ENCODE measurements at regions of chr7 and their contacts with region 1.

Region 1: DNA sequence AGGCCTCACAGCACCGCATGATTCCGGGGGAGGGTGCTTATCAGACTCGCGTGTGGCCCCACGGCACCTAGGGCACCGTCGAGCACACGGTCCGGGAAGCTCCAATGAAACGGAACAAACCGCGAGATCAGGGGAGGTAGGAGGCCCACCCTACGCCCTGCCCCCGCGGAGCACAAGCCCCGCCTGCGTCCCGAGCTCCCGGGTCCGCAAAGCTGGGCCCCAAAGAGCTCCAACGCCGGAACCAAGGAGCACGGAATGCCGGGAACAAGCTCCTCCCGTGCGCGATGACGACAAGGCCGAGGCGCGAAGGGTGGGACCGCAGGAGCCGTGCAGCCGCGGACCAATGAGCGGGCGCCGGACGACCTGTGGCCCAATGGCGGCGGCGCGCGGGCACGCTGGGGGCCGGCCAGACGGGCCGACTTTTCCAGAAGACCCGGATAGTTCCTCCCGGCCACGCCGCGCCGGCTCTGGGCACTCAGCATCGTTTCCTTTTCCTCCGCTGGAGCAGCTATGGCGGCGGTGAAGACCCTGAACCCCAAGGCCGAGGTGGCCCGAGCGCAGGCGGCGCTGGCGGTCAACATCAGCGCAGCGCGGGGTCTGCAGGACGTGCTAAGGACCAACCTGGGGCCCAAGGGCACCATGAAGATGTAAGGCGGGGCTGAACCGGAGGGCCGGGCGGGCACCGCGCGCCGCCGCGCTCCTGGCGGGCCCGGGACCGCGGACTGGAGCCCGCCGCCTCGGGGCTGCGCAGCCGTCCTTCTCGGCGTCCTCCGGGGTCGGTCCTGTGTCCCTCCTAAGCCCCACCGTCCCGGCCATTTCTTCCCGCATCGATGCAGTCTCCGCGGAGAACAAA is at the starts of genes CCT6A and PSPH:
- DNase-seq: peak; percentile 82 to 89 (median 85)
- H3K4me3 ChIP-seq: peak within 1 kb of the TSS; percentile 10 to 95
- H3K4me3 Mint-ChIP-seq: peak within 1 kb of the TSS; percentile 90 to 99 (median 96)
- H3K27ac ChIP-seq: peak within 1 kb of the TSS; percentile 82
- H3K27ac Mint-ChIP-seq: peak within 1 kb of the TSS; percentile 87 to 98 (median 96)
- H3K4me1 ChIP-seq: peaks cover 41% of the 10 kb centered on the region
- H3K4me1 Mint-ChIP-seq: peaks cover 18 to 44% (median 28%) of the 10 kb centered on the region in 4 donors
- H3K27me3 ChIP-seq: no peaks in the 10 kb centered on the region
- H3K27me3 Mint-ChIP-seq: no peaks in the 10 kb centered on the region
- total RNA-seq, gene CCT6A: 72.9 to 78.2 TPM
- total RNA-seq, gene PSPH: 4.3 to 8.0 TPM

Region 2: DNA sequence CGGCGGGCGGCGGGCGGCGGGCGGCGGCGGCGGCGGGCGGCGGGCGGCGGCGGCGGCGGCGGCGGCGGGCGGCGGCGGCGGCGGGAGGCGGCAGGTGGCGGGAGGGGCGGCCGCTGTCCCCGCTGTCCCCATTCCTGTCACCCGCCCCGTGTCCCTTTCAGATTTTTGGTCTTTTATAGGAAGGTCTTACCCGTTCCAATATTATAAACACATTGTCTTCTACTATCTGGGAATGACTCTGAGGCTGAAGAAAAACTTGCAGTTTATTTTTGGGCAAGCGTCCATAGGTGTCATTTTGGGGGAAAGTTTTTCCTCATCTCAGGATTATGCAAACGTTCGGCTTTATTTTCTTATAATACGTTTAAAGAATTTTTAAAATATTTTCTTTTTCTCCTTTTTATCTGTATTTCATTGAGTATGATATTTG is 163.7 kb before region 1 on chr7:
- CTCF ChIA-PET with region 1: no interaction called
- POLR2A ChIA-PET with region 1: no interaction called
- intact Hi-C with region 1: loop called (anchors 2 kb)
- DNase-seq: peak in 2 of 5 donors; percentile 8 to 17
- H3K4me3 ChIP-seq: no peak overlapping the region
- H3K4me3 Mint-ChIP-seq: peak overlapping the region; percentile 81 to 89 (median 87)
- H3K27ac ChIP-seq: no peak overlapping the region
- H3K27ac Mint-ChIP-seq: peak overlapping the region; percentile 74 to 95 (median 88)
- H3K4me1 ChIP-seq: peaks cover 7% of the 10 kb centered on the region
- H3K4me1 Mint-ChIP-seq: peaks cover 5 to 10% (median 6%) of the 10 kb centered on the region in 4 donors
- H3K27me3 ChIP-seq: no peaks in the 10 kb centered on the region
- H3K27me3 Mint-ChIP-seq: peaks cover 0 to 2% of the 10 kb centered on the region in 2 donors

Region 3: GRCh38 chr7:55951637-55952351 is 99.8 kb before region 1 on chr7 and contains the start of gene MRPS17:
- CTCF ChIA-PET with region 1: no interaction called
- POLR2A ChIA-PET with region 1: no interaction called
- intact Hi-C with region 1: loop called (anchors 1 kb)
- DNase-seq: peak; percentile 92 to 95 (median 93)
- H3K4me3 ChIP-seq: peak within 1 kb of the TSS; percentile 88 to 96
- H3K4me3 Mint-ChIP-seq: peak within 1 kb of the TSS; percentile 92 to 97 (median 94)
- H3K27ac ChIP-seq: peak within 1 kb of the TSS; percentile 71
- H3K27ac Mint-ChIP-seq: peak within 1 kb of the TSS; percentile 87 to 99 (median 98)
- H3K4me1 ChIP-seq: peaks cover 12% of the 10 kb centered on the region
- H3K4me1 Mint-ChIP-seq: peaks cover 12 to 32% (median 18%) of the 10 kb centered on the region in 4 donors
- H3K27me3 ChIP-seq: no peaks in the 10 kb centered on the region
- H3K27me3 Mint-ChIP-seq: no peaks in the 10 kb centered on the region
- total RNA-seq, gene MRPS17: 11.5 to 13.2 TPM

Region 4: GRCh38 chr7:56033671-56034432 is 17.7 kb before region 1 on chr7:
- CTCF ChIA-PET with region 1: interaction called, 6 read pairs
- POLR2A ChIA-PET with region 1: interaction called, 20 read pairs
- intact Hi-C with region 1: no loop called
- DNase-seq: peak; percentile 65 to 72 (median 70)
- H3K4me3 ChIP-seq: peak overlapping the region; percentile 82 to 93
- H3K4me3 Mint-ChIP-seq: peak overlapping the region; percentile 82 to 94 (median 88)
- H3K27ac ChIP-seq: peak overlapping the region; percentile 46
- H3K27ac Mint-ChIP-seq: peak overlapping the region; percentile 3 to 91 (median 77)
- H3K4me1 ChIP-seq: no peaks in the 10 kb centered on the region
- H3K4me1 Mint-ChIP-seq: peaks cover 3 to 13% (median 6%) of the 10 kb centered on the region in 4 donors
- H3K27me3 ChIP-seq: no peaks in the 10 kb centered on the region
- H3K27me3 Mint-ChIP-seq: no peaks in the 10 kb centered on the region

Region 5: GRCh38 chr7:56063882-56064625 is 12.5 kb after region 1 on chr7 and contains the start of gene SUMF2:
- CTCF ChIA-PET with region 1: interaction called, 6 read pairs
- POLR2A ChIA-PET with region 1: interaction called, 87 read pairs
- intact Hi-C with region 1: loop called (anchors 1 kb)
- DNase-seq: peak; percentile 88 to 95 (median 92)
- H3K4me3 ChIP-seq: peak within 1 kb of the TSS; percentile 81 to 97
- H3K4me3 Mint-ChIP-seq: peak within 1 kb of the TSS; percentile 89 to 95 (median 94)
- H3K27ac ChIP-seq: peak within 1 kb of the TSS; percentile 72
- H3K27ac Mint-ChIP-seq: peak within 1 kb of the TSS; percentile 90 to 98 (median 95)
- H3K4me1 ChIP-seq: peaks cover 22% of the 10 kb centered on the region
- H3K4me1 Mint-ChIP-seq: peaks cover 21 to 38% (median 28%) of the 10 kb centered on the region in 4 donors
- H3K27me3 ChIP-seq: no peaks in the 10 kb centered on the region
- H3K27me3 Mint-ChIP-seq: no peaks in the 10 kb centered on the region
- total RNA-seq, gene SUMF2: 172 to 177 TPM

Measured in CD4-positive, alpha-beta memory T cell (primary cell).